ENCODE measurements at regions of chrX and their contacts with region 1.

Region 1: GRCh38 chrX:71365876-71366673 is at the start of gene TAF1:
- H3K4me3 ChIP-seq: peak within 1 kb of the TSS; percentile 76
- H3K27ac ChIP-seq: peak within 1 kb of the TSS; percentile 81
- H3K4me1 ChIP-seq: 0 out of 2 replicates have a peak, but pooled peaks cover 2% of the 10 kb centered on the region
- CTCF ChIP-seq: no peak

Region 2: DNA sequence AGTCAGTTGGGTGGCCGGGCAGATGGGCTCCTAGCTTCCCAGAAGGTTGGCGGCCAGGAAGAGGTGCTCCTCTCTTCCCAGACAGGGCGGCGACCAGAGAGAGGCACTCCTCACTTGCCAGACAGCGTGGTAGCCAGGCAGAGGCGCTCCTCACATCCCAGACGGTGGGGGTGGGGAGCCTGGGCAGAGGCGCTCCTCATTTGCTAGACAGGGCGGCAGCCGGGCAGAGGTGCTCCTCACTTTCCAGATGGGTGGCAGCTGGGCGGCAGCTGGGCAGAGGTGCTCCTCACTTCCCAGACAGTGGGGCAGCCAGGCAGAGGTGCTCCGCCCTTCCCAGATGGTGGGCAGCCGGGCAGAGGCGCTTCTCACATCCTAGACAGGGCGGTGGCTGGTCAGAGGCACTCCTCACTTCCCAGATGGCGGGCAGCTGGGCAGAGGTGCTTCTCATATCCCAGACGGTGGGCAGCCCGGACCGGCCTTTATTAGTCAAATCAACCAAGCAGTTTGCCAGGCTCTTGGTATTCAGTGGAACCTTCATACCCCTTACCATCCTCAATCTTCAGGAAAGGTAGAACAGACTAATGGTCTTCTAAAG is 96.2 kb before region 1 on chrX:
- CTCF ChIA-PET with region 1: no interaction called
- POLR2A ChIA-PET with region 1: no interaction called
- H3K4me3 ChIP-seq: no peak overlapping the region
- H3K27ac ChIP-seq: no peak overlapping the region
- H3K4me1 ChIP-seq: no peaks in the 10 kb centered on the region
- CTCF ChIP-seq: no peak

Region 3: DNA sequence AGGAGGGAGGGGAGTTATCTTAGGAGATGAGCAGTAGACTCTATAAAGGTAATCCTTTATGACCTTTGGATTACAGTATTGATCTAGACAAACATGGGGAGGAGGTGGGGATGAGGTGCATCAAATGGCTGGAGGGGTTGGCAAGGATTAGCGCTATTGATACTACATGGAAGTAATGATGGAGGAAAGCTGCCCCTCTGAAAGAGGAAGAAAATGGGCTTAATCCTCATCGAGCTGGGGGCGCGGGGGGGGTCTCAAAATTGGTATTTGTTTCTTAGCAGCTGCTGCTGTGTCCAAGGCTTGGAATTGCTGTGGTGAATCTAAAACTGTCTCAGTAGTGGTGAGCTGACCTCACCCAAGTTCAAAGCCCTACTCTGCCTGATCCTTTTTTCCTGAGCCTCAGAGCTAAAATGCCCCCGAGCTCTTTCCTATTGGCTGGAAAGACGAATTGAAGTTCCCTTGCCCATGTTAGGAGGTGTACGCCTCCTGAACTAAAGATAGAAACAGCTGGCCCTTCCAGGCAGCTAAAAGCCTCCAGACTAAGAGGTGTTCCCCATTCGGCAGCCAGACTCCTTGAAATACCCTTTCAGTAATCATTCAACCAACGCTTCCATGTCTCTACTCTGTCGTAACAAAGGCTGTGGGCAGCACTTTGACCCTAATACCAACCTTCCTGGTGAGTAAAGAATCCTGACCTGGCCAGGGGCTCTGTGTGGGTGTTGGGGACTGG is 64.7 kb before region 1 on chrX and contains the start of gene ITGB1BP2:
- CTCF ChIA-PET with region 1: no interaction called
- POLR2A ChIA-PET with region 1: interaction called, 11 read pairs
- H3K4me3 ChIP-seq: no peak within 1 kb of the TSS
- H3K27ac ChIP-seq: no peak within 1 kb of the TSS
- H3K4me1 ChIP-seq: no peaks in the 10 kb centered on the region
- CTCF ChIP-seq: no peak

Region 4: DNA sequence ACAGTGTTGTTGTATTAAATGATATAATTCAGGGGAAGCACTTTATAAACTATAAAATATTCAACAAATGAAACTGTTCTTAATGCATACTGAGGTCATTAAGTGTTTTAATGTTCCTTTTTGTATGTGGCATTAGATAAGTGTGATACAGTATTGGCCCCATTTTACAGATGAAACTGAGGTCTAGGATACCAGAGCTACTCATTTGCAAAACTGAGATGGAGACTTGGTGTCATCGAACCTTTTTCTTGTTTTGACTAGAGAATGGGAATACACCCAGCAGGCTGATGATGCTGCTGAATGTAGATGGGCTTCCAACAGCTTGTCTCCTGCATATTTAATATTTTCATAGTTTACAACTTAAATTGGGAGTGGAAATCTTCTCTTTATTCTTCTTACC is 34.6 kb after region 1 on chrX:
- CTCF ChIA-PET with region 1: no interaction called
- POLR2A ChIA-PET with region 1: no interaction called
- H3K4me3 ChIP-seq: no peak overlapping the region
- H3K27ac ChIP-seq: no peak overlapping the region
- H3K4me1 ChIP-seq: no peaks in the 10 kb centered on the region
- CTCF ChIP-seq: no peak

Region 5: DNA sequence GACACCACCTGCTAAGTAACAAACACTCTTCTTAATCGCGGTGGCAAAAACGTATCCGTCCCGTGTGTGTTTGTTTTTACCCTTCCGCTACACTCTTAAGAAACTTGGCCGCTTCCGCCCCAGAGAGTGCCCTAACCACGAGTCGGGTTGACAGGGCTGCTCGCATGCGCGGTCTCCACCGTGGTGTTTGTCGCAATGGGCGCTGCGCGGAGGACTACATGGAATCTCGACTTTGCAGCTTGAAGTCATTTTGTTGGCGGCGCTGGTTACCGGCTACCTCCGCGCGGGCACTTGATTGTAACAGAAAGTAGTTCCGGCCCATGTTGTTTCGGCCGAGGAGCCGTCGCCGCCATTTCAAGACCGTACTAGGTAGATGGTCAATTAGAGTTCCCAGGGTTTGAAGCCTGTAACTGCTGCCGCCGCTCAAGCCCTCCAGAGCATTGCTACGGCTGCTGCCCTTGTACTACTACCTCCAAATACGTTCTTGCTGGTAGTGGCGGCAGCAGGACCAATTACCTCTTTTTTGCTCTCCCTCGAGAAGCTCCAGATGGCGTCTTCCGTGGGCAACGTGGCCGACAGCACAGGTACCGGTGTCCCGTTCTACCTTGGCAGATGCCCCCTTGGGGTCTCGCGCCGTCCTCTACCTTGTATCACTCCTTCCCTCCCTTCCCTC is 166.8 kb after region 1 on chrX and contains the start of gene OGT:
- CTCF ChIA-PET with region 1: no interaction called
- POLR2A ChIA-PET with region 1: interaction called, 16 read pairs
- H3K4me3 ChIP-seq: peak within 1 kb of the TSS; percentile 52
- H3K27ac ChIP-seq: peak within 1 kb of the TSS; percentile 75
- H3K4me1 ChIP-seq: peaks cover 3% of the 10 kb centered on the region
- CTCF ChIP-seq: peak; percentile 32; the same call in 1 of the 2 replicates